K562 (cell line): ENCODE measurements at regions of chr7 and their contacts with region 1.

Region 1: GRCh38 chr7:44587843-44588711 is 6.0 kb upstream of the TMED4 start:
- DNase-seq: peak in 1 of 4 experiments; percentile 71
- ATAC-seq: peak; percentile 83
- H3K4me3 ChIP-seq: no peak overlapping the region
- H3K27ac ChIP-seq: no peak overlapping the region
- H3K4me1 ChIP-seq: peaks cover 1% of the 10 kb centered on the region in 2 experiments; a peak in 4 of 5 replicates
- H3K27me3 ChIP-seq: no peaks in the 10 kb centered on the region
- CTCF ChIP-seq: peak; percentile 44 to 82 (median 59); a peak in 5 of 6 replicates
- EP300 ChIP-seq: no peak
- POLR2A ChIP-seq: no peak
- RAD21 ChIP-seq: peak; percentile 93 to 95

Region 2: DNA sequence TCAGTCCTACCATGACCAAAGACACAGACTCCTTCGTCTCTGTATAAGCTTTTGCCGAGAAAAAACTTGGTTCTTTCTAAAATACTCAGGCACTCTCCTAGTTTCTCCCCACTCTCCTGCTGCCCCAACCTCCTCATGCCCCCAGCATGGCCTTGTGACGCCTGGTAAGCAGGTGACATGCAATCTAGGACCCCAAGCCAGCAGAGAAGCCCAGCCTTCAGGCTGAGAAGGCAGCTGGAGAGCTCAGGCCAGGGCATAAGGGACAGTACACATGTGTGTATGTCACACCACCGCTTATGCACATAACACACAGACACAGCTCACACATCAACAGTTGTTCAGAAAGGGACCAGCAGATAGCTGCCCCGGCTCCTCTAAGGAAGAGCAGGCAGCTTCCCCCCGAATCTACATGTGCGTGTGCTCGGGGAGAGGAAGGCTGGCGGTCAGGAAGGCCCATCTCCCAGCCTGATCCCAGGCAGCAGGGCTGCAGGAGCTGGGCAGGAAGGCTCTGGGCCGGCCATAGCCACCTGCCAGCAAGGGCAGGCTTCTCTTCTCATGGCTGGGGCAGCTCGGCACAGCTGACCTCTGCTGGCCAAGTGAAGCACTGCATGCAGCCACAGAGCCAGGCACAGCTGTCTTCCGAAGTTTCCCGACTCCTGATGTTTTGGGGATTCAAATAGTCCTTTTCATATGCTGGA is 22.8 kb before region 1 on chr7:
- CTCF ChIA-PET with region 1: no interaction called
- POLR2A ChIA-PET with region 1: no interaction called
- in situ Hi-C with region 1: no loop called
- intact Hi-C with region 1: no loop called
- DNase-seq: peak; percentile 59 to 78 (median 66)
- ATAC-seq: peak; percentile 89
- H3K4me3 ChIP-seq: no peak overlapping the region
- H3K27ac ChIP-seq: peak overlapping the region; percentile 86
- H3K4me1 ChIP-seq: peaks cover 51 to 54% of the 10 kb centered on the region in 2 experiments; a peak in 4 of 5 replicates
- H3K27me3 ChIP-seq: no peaks in the 10 kb centered on the region
- CTCF ChIP-seq: peak; percentile 86 to 97 (median 91)
- EP300 ChIP-seq: no peak
- POLR2A ChIP-seq: peak; percentile 46; the same call in 1 of the 2 replicates
- RAD21 ChIP-seq: peak; percentile 69 to 77

Region 3: DNA sequence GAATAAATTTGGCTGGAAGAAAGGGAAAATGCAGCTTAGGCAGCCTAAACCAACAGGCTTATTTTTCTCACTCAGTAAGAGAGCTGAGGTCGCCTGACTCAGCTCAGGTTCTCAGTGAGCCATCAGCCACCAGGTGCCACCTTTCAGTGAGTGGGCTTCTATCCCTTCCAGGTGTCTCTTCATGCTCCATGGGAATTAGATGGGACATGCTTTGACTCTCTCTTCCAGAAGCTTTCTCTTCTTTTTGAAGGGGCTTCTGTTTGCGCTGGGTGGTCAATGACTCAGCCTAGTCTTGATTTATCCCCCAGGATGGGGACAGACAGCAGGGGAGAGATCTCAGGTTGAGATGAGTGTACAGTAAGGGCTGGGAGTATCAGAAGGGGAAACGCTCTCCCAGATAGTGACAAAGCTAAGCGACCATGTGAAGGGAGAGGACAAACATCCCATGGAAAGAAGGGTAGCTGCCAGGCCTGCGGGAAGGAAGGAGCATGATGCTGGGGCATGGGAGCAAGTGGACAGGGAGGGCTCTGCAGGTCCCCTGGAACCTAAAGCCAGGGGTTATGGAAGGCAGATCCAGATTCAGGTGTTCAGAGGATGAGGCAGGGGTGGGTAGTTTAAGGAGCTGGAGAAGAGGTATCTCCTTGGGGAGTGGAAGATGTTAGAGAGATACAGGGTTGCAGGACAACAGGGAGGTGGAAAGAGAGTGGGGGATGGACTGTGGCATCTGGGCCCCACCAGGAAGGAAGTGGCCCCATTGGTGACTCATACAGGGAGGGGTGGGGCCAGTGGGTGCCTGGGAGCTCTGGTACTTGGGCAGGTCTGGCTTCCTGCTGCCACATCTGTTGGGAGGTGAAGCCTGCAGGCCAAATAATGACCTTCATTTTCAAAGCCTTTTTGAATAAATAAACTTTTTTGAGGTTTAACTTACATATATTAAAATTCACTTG is 50.8 kb after region 1 on chr7:
- CTCF ChIA-PET with region 1: no interaction called
- POLR2A ChIA-PET with region 1: no interaction called
- in situ Hi-C with region 1: no loop called
- intact Hi-C with region 1: loop called (anchors 5 kb)
- DNase-seq: peak; percentile 85 to 92 (median 88)
- ATAC-seq: peak; percentile 89
- H3K4me3 ChIP-seq: no peak overlapping the region
- H3K27ac ChIP-seq: peak overlapping the region; percentile 84
- H3K4me1 ChIP-seq: peaks cover 40 to 48% of the 10 kb centered on the region in 2 experiments
- H3K27me3 ChIP-seq: no peaks in the 10 kb centered on the region
- CTCF ChIP-seq: peak in 1 of 3 experiments; percentile 19; a peak in 1 of 6 replicates
- EP300 ChIP-seq: peak; percentile 72; the same call in 1 of the 2 replicates
- POLR2A ChIP-seq: no peak; the same call in 1 of the 2 replicates
- RAD21 ChIP-seq: 0 out of 4 replicates have a peak, but pooled peaks of 1 of the 2 experiments have one; percentile 21

Region 4: DNA sequence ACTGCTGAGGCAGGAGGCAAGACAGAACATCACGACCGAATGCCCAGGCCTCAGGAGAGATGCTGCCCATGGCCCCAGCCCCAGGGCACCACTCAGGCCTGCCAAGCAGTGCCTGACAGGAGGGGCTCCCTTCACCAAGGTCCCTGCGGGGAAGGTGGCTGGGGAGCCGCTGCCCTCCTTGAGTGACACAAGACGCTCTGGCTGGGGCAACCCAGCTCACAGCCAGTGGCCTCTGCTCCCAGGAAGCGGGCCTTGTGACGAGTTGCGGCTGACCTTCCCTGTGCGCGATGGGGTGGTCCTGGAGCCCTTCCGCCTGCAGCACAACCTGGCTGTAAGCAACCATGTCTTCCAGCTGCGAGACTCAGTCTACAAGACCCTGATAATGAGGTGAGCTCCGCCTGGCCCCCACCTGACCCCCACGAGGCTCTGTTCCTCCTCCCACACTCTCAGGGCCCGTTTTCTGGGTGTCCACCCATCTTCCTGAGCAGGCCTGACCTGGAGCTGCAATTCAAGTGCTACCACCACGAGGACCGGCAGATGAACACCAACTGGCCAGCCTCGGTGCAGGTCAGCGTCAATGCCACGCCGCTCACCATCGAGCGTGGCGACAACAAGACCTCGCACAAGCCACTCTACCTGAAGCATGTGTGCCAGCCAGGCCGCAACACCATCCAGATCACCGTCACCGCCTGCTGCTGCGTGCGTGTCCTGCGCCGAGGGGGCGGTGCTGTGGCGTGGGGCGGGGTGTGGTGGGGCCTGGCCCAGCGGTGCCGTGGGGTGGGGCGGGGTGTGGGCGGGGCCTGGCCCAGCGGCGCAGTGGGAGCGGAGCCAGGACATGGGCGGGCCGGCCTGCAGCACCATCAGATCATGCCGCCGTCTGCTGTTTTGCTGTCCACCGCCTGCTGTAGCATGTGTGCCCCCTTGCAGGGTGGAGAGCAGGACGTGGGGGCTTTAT is 173.4 kb after region 1 on chr7:
- CTCF ChIA-PET with region 1: no interaction called
- POLR2A ChIA-PET with region 1: no interaction called
- in situ Hi-C with region 1: no loop called
- intact Hi-C with region 1: loop called (anchors 5 kb)
- DNase-seq: peak; percentile 94 to 99 (median 99)
- ATAC-seq: peak; percentile 98
- H3K4me3 ChIP-seq: peak overlapping the region; percentile 46
- H3K27ac ChIP-seq: peak overlapping the region; percentile 62
- H3K4me1 ChIP-seq: peaks cover 16 to 54% of the 10 kb centered on the region in 2 experiments; a peak in 4 of 5 replicates
- H3K27me3 ChIP-seq: no peaks in the 10 kb centered on the region
- CTCF ChIP-seq: peak in 1 of 3 experiments; percentile 8; a peak in 1 of 6 replicates
- EP300 ChIP-seq: no peak
- POLR2A ChIP-seq: peak; percentile 67
- RAD21 ChIP-seq: no peak

Region 5: GRCh38 chr7:44921607-44922359 is 333.7 kb after region 1 on chr7:
- CTCF ChIA-PET with region 1: interaction called, 17 read pairs
- POLR2A ChIA-PET with region 1: no interaction called
- in situ Hi-C with region 1: loop called (anchors 5 kb)
- intact Hi-C with region 1: loop called (anchors 1 kb)
- DNase-seq: peak; percentile 82 to 91 (median 85)
- ATAC-seq: peak; percentile 98
- H3K4me3 ChIP-seq: 0 out of 2 replicates have a peak overlapping the region, but pooled peaks have one; percentile 2
- H3K27ac ChIP-seq: peak overlapping the region; percentile 51
- H3K4me1 ChIP-seq: peaks cover 7 to 13% of the 10 kb centered on the region in 2 experiments; a peak in 3 of 5 replicates
- H3K27me3 ChIP-seq: no peaks in the 10 kb centered on the region
- CTCF ChIP-seq: peak; percentile 85 to 88 (median 85)
- EP300 ChIP-seq: peak; percentile 14; the same call in 1 of the 2 replicates
- POLR2A ChIP-seq: peak; percentile 74
- RAD21 ChIP-seq: peak; percentile 90 to 91

Region 6: DNA sequence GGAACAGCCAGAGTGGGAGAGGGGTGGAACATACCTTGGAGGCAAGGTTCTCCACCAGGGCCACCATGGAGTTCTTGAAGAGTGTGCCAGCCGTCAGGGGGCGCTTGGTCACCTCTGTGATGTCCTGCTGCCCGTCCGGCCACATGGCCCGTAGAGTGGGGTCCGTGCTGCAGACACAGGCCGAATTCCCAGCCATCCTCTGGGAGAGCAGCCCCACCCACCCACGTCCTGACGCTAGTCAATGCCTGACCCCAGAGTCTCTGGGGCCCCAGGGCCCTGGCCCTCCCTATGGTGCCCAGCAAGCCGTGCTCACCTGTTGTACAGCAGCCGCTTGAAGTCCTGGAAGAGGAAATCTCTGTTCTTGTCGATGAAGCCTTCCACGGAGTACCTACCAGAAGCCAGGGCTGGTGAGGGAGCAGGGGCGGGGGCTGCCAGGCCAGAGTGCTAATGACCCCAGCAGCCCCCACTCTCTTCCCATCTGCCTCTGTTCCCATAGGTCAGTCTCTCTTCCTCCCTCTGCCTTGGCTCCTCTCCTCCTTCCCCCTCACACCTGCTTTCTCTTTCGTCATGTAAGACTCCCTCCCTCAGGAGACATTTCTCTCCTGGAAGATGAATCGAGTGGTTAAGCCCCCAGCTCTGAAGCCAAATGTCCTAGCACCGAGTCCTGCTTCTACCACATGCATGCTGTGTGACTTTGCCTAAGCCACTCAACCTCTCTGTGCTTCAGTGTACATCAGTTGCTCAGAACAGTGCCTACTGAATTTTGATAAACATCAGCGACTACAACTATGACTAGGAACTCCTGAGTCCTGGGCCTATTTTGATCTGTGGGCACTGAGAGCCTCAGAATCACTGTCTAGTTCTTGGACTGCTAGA is 379.7 kb after region 1 on chr7:
- CTCF ChIA-PET with region 1: interaction called, 3 read pairs
- POLR2A ChIA-PET with region 1: interaction called, 6 read pairs
- in situ Hi-C with region 1: no loop called
- intact Hi-C with region 1: loop called (anchors 5 kb)
- DNase-seq: peak; percentile 61 to 66 (median 63)
- ATAC-seq: peak; percentile 76
- H3K4me3 ChIP-seq: no peak overlapping the region
- H3K27ac ChIP-seq: no peak overlapping the region
- H3K4me1 ChIP-seq: peaks cover 0 to 45% of the 10 kb centered on the region in 2 experiments; a peak in 3 of 5 replicates
- H3K27me3 ChIP-seq: no peaks in the 10 kb centered on the region
- CTCF ChIP-seq: peak; percentile 66 to 72 (median 71)
- EP300 ChIP-seq: no peak
- POLR2A ChIP-seq: no peak
- RAD21 ChIP-seq: peak; percentile 60 to 77

Region 7: GRCh38 chr7:45136106-45137060 is 548.3 kb after region 1 on chr7:
- CTCF ChIA-PET with region 1: interaction called, 7 read pairs
- POLR2A ChIA-PET with region 1: no interaction called
- in situ Hi-C with region 1: loop called (anchors 10 kb)
- intact Hi-C with region 1: loop called (anchors 1 kb)
- DNase-seq: peak; percentile 75 to 86 (median 76)
- ATAC-seq: peak; percentile 74
- H3K4me3 ChIP-seq: no peak overlapping the region
- H3K27ac ChIP-seq: no peak overlapping the region
- H3K4me1 ChIP-seq: peaks cover 5 to 15% of the 10 kb centered on the region in 2 experiments
- H3K27me3 ChIP-seq: no peaks in the 10 kb centered on the region
- CTCF ChIP-seq: peak; percentile 84 to 96 (median 87)
- EP300 ChIP-seq: 0 out of 2 replicates have a peak, but pooled peaks have one; percentile 13
- POLR2A ChIP-seq: no peak
- RAD21 ChIP-seq: peak; percentile 96